ENCODE measurements at regions of chr7 and their contacts with region 1.

Region 1: DNA sequence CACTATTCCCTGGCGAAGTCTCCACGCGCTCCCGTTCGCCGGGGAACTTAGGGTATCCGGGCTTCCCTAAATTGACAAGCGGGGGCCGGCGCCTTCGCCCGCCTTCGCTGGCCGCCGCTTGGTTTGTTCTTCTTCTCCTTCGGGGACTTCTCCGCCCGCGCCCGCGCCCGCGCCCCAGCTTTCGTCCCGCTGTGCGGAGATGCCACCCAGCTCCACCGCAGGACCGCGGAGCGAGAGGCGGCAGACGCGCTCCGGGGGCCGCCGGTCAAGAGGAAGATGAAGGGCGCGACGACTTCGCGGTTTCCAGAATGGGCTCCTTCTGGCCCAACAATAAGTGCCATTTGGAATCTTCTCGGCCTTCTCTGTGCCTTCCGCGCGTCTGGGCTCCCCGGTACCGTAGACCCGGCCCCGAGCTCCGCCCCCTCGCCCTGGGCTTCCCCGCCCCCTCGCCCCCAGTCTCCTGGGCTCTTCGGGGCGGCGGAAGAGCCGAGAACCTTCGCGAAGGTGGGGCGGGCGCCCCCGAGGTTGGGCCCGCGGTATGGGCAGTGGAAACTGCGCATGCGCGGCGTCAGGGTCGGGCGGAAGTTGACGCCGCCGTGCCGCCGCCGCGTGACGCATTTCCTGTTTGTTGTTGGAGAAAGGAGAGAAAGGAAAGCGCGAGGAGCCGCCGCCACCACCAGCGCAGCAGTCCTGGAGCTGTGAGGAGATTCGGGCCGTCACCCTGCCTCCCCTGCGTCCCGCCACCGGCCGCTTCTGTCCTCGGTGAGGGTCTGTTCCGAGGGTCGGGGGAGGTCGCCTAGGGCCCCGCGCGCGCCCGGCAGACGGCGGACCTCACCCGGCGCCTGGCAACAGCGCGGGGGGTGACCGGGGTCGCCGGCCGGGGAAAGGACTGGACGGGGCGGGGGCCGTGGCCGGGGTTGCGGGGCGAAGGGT is at the start of gene DNAJB6:
- DNase-seq: peak; percentile 95
- H3K4me3 Mint-ChIP-seq: peak within 1 kb of the TSS; percentile 92
- H3K27ac Mint-ChIP-seq: peak within 1 kb of the TSS; percentile 95
- H3K4me1 Mint-ChIP-seq: peaks cover 39% of the 10 kb centered on the region
- H3K27me3 Mint-ChIP-seq: no peaks in the 10 kb centered on the region
- total RNA-seq, gene DNAJB6: 69.0 to 72.1 TPM

Region 2: GRCh38 chr7:156949541-156950380 is 386.9 kb before region 1 on chr7 and contains the start of gene NOM1:
- CTCF ChIA-PET with region 1: no interaction called
- intact Hi-C with region 1: loop called (anchors 10 kb)
- DNase-seq: peak; percentile 92
- H3K4me3 Mint-ChIP-seq: peak within 1 kb of the TSS; percentile 90
- H3K27ac Mint-ChIP-seq: peak within 1 kb of the TSS; percentile 53
- H3K4me1 Mint-ChIP-seq: peaks cover 37% of the 10 kb centered on the region
- H3K27me3 Mint-ChIP-seq: peaks cover 12% of the 10 kb centered on the region
- total RNA-seq, gene NOM1: 26.0 to 28.3 TPM

Region 3: DNA sequence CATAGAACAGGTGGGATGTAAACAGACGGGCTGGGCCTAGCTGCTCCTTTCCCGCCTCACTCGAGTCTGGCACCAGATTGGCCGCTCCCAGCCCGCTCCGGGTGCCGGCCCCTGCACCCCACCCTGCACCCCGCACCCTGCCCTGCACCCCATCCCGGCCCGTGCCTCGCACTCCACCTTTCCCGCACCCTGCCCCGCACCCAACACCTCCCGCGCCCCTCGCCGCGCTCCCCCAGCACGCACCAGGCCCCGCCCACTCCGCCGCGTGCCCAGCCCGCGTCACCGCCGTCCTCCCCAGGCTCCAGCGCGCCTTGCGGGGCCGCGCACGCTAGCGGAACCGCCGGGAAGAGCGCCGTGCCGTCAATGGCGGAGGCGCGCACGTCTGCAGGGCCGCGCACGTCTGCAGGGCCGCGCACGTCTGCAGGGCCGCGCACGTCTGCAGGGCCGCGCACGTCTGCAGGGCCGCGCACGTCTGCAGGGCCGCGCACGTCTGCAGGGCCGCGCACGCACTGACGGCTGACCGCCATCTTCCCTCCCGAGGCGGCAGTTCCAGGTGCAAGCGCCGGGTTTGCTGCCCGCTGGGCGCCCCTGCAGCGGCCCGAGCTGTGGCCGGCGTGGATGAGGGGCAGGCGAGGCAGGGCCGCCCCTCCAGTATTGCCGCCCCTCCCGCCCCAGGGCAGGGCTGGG is 198.1 kb before region 1 on chr7 and contains the start of gene UBE3C:
- CTCF ChIA-PET with region 1: no interaction called
- intact Hi-C with region 1: loop called (anchors 1 kb)
- DNase-seq: peak; percentile 87
- H3K4me3 Mint-ChIP-seq: peak within 1 kb of the TSS; percentile 84
- H3K27ac Mint-ChIP-seq: peak within 1 kb of the TSS; percentile 92
- H3K4me1 Mint-ChIP-seq: peaks cover 38% of the 10 kb centered on the region
- H3K27me3 Mint-ChIP-seq: no peaks in the 10 kb centered on the region
- total RNA-seq, gene UBE3C: 52.9 to 55.7 TPM

Region 4: DNA sequence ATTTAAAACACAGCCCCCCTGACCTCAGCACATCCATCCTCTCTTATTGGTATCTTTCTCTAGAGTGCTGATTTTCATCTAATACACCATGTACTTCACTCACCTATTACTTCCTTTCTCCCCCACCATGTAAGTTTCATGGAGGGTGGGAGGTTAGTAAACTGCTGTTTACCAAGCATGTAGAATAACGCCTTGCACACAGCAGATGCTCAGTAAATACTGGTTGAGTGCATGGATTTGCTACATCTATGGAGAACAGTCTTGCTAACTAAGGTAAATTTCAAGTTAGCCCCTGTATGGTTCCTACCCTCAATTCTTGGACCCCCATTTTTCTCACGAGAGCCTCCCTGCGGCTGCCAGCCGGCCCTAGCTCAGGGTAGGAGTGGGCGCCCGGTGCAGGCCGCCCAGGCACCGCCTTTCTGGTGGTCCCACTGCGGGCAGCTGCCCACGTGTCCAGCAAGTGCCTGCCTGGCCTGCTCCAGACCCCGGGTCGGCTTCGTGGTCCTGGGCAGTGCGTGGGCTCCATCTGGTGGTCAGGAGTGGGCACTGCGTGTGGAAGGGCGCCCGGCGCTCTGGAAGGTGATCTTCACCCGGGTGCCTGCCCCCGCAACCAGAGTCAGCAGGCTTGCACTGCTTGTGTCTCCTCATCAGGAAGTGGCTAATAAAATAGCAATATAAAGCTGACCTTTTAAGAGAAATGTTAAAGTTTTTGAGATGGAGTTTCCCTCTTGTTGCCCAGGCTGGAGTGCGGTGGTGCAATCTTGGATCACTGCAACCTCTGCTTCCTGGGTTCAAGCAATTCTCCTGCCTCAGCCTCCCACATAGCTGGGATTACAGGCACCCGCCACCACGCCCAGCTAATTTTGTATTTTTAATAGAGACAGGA is 63.2 kb before region 1 on chr7:
- CTCF ChIA-PET with region 1: interaction called, 29 read pairs
- intact Hi-C with region 1: loop called (anchors 1 kb)
- DNase-seq: peak; percentile 66
- H3K4me3 Mint-ChIP-seq: no peak overlapping the region
- H3K27ac Mint-ChIP-seq: no peak overlapping the region
- H3K4me1 Mint-ChIP-seq: peaks cover 16% of the 10 kb centered on the region
- H3K27me3 Mint-ChIP-seq: peaks cover 9% of the 10 kb centered on the region

Region 5: GRCh38 chr7:157299613-157300368 is 36.9 kb before region 1 on chr7:
- CTCF ChIA-PET with region 1: interaction called, 6 read pairs
- intact Hi-C with region 1: loop called (anchors 1 kb)
- DNase-seq: no peak
- H3K4me3 Mint-ChIP-seq: no peak overlapping the region
- H3K27ac Mint-ChIP-seq: no peak overlapping the region
- H3K4me1 Mint-ChIP-seq: peaks cover 32% of the 10 kb centered on the region
- H3K27me3 Mint-ChIP-seq: no peaks in the 10 kb centered on the region

Region 6: GRCh38 chr7:157318012-157318709 is 18.5 kb before region 1 on chr7:
- CTCF ChIA-PET with region 1: interaction called, 5 read pairs
- intact Hi-C with region 1: loop called (anchors 2 kb)
- DNase-seq: peak; percentile 61
- H3K4me3 Mint-ChIP-seq: no peak overlapping the region
- H3K27ac Mint-ChIP-seq: peak overlapping the region; percentile 36
- H3K4me1 Mint-ChIP-seq: peaks cover 13% of the 10 kb centered on the region
- H3K27me3 Mint-ChIP-seq: no peaks in the 10 kb centered on the region

Region 7: DNA sequence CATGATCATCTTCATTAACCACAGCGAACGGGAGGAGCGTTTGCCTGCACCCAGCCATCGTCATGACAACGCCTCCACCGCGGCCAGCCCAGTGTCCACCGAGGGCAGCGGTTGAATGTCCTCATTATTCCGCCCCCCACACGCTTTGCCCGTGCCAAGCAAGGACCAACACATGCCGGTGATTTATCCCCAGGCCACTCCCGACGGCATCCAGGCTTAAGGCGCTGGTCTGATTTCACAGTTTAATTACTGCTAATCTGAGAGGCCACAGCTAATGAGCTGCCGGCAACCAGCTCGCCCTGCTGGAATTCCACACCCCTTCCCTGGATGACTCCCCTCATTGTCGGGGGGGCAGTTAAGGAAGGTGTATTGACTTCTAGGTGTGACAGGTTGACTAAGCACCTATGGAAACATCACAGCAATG is 432.4 kb after region 1 on chr7:
- CTCF ChIA-PET with region 1: no interaction called
- intact Hi-C with region 1: no loop called
- DNase-seq: no peak
- H3K4me3 Mint-ChIP-seq: no peak overlapping the region
- H3K27ac Mint-ChIP-seq: no peak overlapping the region
- H3K4me1 Mint-ChIP-seq: no peaks in the 10 kb centered on the region
- H3K27me3 Mint-ChIP-seq: peaks cover 5% of the 10 kb centered on the region